GM10248 (cell line): ENCODE measurements at regions of chr11 and their contacts with region 1.

Region 1: GRCh38 chr11:106306942-106307341 is 229.5 kb downstream of the AASDHPPT start:
- DNase-seq: no peak
- CTCF ChIP-seq: no peak

Region 2: GRCh38 chr11:106167085-106167484 is 139.9 kb before region 1 on chr11:
- CTCF ChIA-PET with region 1: no interaction called
- POLR2A ChIA-PET with region 1: no interaction called
- DNase-seq: no peak
- CTCF ChIP-seq: no peak

Region 3: DNA sequence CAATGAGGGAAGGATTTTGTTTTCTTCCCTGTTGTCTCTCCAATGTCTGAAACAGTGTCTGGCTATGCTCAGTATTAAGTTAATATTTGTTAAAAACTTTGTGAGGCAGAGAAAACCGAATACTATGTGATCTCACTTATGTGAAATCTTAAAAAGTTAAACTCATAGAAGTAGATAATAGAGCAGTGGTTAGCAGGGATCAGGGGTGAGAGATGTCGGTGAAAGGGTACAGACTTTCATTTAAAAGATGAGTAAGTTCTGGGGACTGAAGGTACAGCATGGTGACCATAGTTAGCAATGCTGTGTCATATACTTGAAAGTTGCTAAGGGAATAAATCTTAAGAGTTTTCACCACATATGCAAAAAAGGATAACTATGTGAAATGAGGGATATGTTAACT is 15.2 kb after region 1 on chr11:
- CTCF ChIA-PET with region 1: interaction called, 13 read pairs
- POLR2A ChIA-PET with region 1: no interaction called
- DNase-seq: no peak
- CTCF ChIP-seq: no peak

Region 4: DNA sequence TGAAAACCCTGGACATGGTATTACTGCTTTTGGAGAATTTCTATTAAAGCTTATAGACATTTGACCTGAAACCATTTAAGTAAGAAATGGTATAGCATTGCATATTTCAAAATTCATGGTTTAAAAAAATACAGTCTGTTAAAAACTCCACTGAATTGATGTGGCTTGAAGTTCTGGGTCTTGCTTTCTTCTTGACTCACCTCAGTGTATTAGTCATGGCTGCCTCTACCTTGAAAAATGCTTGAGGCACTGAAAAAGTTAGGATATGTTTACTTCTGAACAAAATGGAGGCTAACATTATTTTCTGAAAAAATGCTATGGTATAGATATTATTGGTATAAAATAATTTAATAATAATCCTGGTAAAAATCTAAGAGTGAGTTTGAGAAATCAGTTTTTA is 119.8 kb after region 1 on chr11:
- CTCF ChIA-PET with region 1: no interaction called
- POLR2A ChIA-PET with region 1: no interaction called
- DNase-seq: no peak
- CTCF ChIP-seq: no peak